Activated CD4-positive, alpha-beta memory T cell treated with anti-CD3 and anti-CD28 coated beads for 36 hours (primary cell): ENCODE measurements at regions of chr19 and their contacts with region 1.

Region 1: DNA sequence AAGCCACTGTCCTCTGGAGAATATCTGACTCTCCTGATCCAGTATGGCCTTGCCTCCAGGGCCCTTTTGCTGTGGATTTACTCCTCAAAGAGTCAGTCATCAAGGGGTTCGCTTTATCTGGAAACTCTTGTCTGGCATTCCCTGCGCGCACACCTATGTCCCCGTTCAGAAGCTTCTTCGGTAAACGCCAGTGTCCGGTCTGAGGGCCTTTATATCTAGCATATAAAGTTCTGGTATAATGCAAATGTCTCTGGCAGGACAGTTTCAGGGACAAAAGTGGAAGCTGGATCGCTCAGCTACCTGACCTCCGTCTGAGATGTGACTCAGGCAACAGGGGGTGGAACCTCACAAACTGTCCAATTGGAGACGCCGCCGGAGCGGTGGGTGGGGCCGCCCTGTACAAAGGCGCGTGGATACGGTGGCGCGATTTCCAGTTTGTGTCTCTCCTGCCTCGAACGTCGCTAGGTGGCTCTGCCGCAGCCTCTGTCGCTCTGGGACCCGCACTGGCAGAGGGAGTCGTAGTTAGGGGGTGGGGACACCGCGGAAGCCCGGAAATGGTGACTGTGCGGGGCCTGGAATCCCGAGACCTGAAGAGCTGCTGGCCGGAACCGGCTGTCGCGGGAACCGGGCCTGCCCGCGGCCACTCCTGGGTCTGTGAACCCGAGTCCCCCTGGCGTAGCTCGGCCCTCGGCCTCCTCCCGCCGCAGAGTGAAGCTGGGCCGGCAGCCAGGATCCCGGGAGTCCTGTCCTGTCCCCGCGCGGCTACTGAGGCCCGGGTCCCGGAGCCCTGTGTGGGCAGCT is 10.6 kb upstream of the ZNF709 start:
- DNase-seq: peak; percentile 98
- H3K4me3 Mint-ChIP-seq: peak overlapping the region; percentile 86
- H3K27ac Mint-ChIP-seq: peak overlapping the region; percentile 88
- H3K4me1 Mint-ChIP-seq: peaks cover 12% of the 10 kb centered on the region
- H3K27me3 Mint-ChIP-seq: no peaks in the 10 kb centered on the region

Region 2: DNA sequence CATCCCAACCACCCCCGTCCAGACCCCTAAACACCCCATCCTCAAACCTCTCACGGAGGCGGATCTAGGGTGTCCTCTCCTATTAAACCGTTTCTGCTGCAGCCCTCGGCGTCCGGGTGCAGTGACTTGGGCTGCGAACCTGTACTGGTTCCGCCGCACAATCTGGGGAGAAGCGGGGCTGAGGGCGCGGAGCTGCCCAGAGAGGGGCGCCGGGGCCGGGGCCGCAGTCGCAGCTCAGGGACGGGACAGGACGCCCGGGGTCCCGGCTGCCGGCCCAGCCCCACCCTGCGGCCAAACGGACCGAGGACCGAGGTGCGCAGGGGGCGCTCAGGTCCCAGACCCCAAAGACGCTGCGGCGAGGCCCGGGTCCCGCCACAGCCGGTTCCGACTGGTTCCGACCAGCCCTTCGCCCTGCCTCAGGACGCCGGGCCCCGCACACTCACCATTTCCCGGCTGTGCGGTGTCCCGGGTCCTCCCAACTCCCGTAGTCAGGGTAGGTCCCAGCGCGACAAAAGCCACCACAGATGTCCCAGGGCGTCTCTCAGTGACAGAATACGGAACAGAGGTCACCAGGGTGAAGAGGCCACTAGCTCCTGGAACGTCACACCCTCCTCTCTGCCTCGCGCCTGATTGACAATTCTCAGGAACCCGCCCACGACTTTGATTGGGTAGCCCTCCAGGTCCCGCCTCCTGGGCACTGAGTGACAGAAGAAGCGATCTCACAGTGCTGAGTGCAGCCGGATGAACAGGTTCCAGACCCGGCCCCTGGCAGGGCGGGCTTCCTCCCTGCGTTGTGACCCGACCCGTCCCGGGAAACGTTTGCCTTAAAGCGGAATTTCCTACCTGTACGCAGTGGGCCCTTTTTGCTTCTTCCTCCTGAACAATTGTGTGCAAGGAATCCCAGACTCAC is 200.7 kb before region 1 on chr19 and contains the start of gene ZNF44:
- CTCF ChIA-PET with region 1: no interaction called
- POLR2A ChIA-PET with region 1: interaction called, 3 read pairs
- intact Hi-C with region 1: loop called (anchors 10 kb)
- DNase-seq: peak; percentile 99
- H3K4me3 Mint-ChIP-seq: peak within 1 kb of the TSS; percentile 98
- H3K27ac Mint-ChIP-seq: peak within 1 kb of the TSS; percentile 98
- H3K4me1 Mint-ChIP-seq: peaks cover 27% of the 10 kb centered on the region
- H3K27me3 Mint-ChIP-seq: no peaks in the 10 kb centered on the region
- total RNA-seq, gene ZNF44: 7.5 to 8.9 TPM

Region 3: GRCh38 chr19:12440541-12441316 is 54.5 kb before region 1 on chr19 and contains the start of gene ZNF443:
- CTCF ChIA-PET with region 1: interaction called, 3 read pairs
- POLR2A ChIA-PET with region 1: interaction called, 7 read pairs
- intact Hi-C with region 1: loop called (anchors 2 kb)
- DNase-seq: peak; percentile 100
- H3K4me3 Mint-ChIP-seq: peak within 1 kb of the TSS; percentile 97
- H3K27ac Mint-ChIP-seq: peak within 1 kb of the TSS; percentile 92
- H3K4me1 Mint-ChIP-seq: peaks cover 11% of the 10 kb centered on the region
- H3K27me3 Mint-ChIP-seq: no peaks in the 10 kb centered on the region
- total RNA-seq, gene ZNF443: 5.1 to 5.3 TPM

Region 4: DNA sequence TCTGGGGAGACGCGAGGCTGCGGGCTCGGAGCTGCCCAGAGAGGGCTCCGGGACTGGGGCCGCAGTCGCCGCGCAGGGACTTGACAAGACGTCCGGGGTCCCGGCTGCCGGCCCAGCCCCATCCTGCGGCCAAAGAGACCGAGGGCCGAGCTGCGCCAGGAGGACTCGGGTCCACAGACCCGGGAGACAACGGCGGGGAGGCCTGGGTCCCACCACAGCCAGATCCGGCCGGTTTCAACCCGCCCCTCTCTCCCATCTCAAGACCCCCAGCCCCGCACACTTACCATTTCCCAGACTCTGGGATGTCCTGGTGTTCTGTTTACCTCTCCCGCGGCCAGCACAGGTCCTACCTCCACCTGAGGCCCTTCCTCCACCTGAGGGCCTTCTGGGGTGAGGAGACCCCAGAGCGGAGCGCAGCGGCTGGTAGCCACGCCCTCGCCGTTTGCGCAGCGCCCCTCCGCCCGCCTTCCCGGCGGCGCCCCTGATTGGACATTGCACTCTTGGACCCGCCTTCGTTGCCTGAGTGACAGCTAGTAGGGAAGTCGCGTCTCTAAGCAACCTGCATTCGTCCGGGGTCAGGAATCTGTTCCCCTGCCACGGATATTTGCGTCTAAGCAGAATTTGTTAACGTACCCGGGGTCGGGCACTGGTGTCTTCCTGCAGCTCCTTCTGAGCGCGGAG is 10.7 kb before region 1 on chr19 and contains the start of gene ZNF709:
- CTCF ChIA-PET with region 1: interaction called, 20 read pairs
- POLR2A ChIA-PET with region 1: interaction called, 11 read pairs
- intact Hi-C with region 1: loop called (anchors 1 kb)
- DNase-seq: peak; percentile 92
- H3K4me3 Mint-ChIP-seq: peak within 1 kb of the TSS; percentile 89
- H3K27ac Mint-ChIP-seq: peak within 1 kb of the TSS; percentile 43
- H3K4me1 Mint-ChIP-seq: peaks cover 29% of the 10 kb centered on the region
- H3K27me3 Mint-ChIP-seq: no peaks in the 10 kb centered on the region
- total RNA-seq, gene ZNF709: 1.5 to 2.4 TPM

Region 5: DNA sequence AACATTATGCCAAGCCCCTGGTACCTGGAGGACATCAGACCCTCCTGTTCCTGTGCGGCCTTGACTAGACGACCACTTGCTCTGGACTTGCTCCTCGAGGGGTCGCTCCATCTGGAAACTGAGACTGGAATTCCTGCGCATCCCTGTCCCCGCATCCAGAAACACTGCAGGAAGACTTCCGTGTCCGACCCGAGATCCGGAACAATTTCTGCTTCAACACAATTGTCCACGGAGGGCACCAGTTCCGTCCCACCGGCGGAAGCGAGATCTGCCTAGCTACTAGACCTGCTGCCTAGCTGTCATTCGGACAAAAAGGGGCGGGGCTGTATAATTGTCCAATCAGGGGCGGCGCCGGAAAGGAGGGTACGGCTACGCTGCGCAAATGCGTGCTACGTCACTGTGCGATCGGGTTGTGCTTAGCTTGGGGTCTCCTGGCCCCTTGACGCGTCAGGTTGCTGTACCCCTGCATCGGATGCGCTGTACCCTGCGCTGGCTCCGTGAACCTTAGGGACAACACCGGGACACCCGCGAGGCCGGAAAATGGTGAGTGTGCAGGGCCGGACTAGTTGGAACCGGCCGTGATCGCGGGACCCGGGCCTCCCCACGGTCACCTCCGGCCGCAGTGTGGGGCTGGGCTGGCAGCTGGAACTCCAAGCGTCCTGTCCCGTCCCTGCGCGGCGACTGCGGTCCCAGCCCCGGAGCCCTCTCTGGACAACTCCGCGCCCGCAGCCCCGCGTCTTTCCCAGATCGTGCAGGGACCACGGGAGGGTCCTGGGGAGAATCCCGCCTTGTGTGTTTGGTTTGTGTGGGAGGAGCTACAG is 115.5 kb after region 1 on chr19 and contains the starts of genes ZNF490 and ZNF791:
- CTCF ChIA-PET with region 1: no interaction called
- POLR2A ChIA-PET with region 1: interaction called, 3 read pairs
- intact Hi-C with region 1: loop called (anchors 5 kb)
- DNase-seq: peak; percentile 98
- H3K4me3 Mint-ChIP-seq: peak within 1 kb of the TSS; percentile 100
- H3K27ac Mint-ChIP-seq: peak within 1 kb of the TSS; percentile 99
- H3K4me1 Mint-ChIP-seq: peaks cover 26% of the 10 kb centered on the region
- H3K27me3 Mint-ChIP-seq: no peaks in the 10 kb centered on the region
- total RNA-seq, gene ZNF490: 6.9 to 7.0 TPM
- total RNA-seq, gene ZNF791: 18.2 to 19.1 TPM

Region 6: DNA sequence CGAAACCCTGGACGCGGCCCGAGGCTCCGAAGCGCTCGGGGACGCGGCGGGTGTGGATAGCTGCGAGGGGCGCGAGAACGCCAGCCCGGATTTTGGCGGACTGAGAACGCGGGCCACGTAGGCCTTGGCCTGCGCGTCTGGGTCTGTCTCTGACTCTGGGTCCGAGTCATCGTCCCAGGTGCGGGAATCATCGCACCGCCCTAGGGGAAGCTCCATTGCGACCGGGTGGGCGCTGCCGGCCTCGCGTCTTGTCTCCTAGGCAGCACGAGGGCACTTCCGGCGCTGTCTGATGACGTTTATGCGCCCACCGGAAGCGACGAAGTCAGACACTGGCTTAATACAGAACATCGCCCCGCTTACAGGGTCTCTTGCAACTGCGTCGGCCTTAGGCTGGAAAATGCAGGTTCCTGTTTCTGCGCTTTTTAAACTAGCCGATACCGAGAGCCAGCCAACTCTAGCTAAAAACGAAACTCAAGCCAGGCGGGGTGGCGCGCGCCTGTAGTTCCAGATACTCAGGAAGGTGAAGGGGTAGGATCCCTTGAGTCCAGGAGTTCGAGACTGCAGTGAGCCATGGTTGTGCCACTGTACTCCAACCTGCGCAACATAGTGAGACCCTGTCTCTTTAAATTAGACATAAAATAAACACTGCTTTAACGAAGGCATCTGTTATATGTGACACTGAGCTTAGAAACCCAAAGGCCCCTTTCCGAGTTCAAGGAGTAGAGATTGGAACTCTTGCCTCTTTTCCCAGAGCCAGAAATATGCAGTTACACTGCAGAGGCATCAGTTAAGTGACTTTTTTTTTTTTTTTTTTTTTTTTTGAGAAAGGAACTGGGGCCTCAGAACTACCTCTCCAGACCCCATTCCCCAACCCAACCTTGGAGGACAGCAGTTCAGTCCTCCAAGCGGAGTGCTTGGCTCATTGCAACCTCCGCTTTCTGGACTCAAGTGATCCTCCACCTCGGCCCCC is 201.4 kb after region 1 on chr19 and contains the start of gene FBXW9:
- CTCF ChIA-PET with region 1: no interaction called
- POLR2A ChIA-PET with region 1: no interaction called
- intact Hi-C with region 1: no loop called
- DNase-seq: peak; percentile 98
- H3K4me3 Mint-ChIP-seq: peak within 1 kb of the TSS; percentile 84
- H3K27ac Mint-ChIP-seq: peak within 1 kb of the TSS; percentile 87
- H3K4me1 Mint-ChIP-seq: peaks cover 14% of the 10 kb centered on the region
- H3K27me3 Mint-ChIP-seq: no peaks in the 10 kb centered on the region
- total RNA-seq, gene FBXW9: 6.6 to 7.0 TPM